ENCODE measurements at regions of chr12 and their contacts with region 1.

Region 1: DNA sequence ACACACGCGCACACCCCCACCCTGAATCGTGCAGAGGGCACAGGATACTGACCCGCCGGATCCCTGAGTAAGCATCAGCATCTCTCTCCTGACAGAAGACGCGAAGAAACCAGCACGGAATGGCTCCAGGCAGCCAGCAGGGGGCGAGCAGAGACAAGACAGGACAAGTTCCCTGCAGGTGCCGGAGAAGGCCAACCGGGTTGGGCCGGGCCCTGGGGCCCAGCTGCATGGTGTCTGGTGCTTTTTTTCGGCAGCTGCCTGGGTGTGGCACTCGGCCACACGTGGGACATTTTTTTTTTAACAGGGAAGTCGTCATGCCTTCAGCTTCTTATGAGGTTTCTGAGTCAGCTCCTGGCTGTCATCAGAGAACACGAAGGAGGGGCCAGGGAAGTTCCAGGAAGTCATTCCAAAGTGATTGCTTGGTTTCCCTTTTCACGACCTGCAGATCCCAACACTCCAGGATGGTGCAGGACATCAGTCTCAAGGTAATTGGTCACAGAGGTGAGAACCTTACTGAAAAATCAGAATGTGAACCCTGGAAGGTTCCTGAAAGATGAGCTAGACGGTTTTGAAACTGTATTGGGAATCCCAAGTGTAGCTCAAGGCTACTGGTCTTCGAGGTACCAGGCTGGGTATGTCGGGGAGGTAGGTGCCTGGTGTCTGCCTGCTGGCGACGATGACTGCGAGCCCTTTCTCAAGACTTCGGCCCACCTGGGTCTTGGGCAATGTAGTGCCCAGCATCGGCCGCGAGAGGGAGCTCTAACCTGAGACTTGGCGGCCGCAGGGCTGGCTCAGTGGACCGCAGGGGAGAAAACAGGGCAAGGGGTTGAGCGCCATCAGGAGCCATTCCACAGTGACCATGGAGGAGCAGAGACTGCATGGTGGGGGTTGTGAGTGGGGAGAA is 190.8 kb upstream of the PRMT8 start:
- DNase-seq: peak; percentile 87
- H3K4me3 Mint-ChIP-seq: peak overlapping the region; percentile 55
- H3K27ac Mint-ChIP-seq: peak overlapping the region; percentile 62
- H3K4me1 Mint-ChIP-seq: peaks cover 11% of the 10 kb centered on the region
- H3K27me3 Mint-ChIP-seq: peaks cover 7% of the 10 kb centered on the region

Region 2: DNA sequence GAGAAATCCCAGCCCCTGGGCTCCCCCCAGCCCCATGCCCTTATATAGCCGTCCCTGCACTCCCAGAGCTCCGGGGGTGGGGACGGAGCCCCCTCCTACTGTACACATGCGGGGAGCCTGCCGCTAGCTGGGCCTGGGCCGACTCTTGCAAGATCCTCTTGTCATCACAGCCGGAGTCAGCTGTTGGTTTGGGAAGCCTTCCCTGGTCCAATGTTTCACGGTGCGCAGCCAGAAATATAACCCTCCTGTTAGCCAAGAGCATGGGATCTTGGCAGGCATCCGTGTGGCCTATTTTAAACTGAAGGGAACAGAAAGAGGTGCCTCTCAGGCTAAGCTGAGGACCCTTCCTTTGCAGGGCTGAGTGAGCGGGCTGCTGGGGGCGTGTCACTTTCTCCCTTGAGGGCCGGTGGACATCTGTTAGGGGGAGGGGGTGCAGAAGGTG is 47.7 kb before region 1 on chr12:
- CTCF ChIA-PET with region 1: no interaction called
- POLR2A ChIA-PET with region 1: no interaction called
- intact Hi-C with region 1: no loop called
- DNase-seq: no peak
- H3K4me3 Mint-ChIP-seq: no peak overlapping the region
- H3K27ac Mint-ChIP-seq: no peak overlapping the region
- H3K4me1 Mint-ChIP-seq: peaks cover 6% of the 10 kb centered on the region
- H3K27me3 Mint-ChIP-seq: no peaks in the 10 kb centered on the region

Region 3: GRCh38 chr12:3275171-3276041 is 24.8 kb before region 1 on chr12:
- CTCF ChIA-PET with region 1: interaction called, 33 read pairs
- POLR2A ChIA-PET with region 1: no interaction called
- intact Hi-C with region 1: no loop called
- DNase-seq: peak; percentile 80
- H3K4me3 Mint-ChIP-seq: no peak overlapping the region
- H3K27ac Mint-ChIP-seq: no peak overlapping the region
- H3K4me1 Mint-ChIP-seq: no peaks in the 10 kb centered on the region
- H3K27me3 Mint-ChIP-seq: peaks cover 10% of the 10 kb centered on the region

Region 4: DNA sequence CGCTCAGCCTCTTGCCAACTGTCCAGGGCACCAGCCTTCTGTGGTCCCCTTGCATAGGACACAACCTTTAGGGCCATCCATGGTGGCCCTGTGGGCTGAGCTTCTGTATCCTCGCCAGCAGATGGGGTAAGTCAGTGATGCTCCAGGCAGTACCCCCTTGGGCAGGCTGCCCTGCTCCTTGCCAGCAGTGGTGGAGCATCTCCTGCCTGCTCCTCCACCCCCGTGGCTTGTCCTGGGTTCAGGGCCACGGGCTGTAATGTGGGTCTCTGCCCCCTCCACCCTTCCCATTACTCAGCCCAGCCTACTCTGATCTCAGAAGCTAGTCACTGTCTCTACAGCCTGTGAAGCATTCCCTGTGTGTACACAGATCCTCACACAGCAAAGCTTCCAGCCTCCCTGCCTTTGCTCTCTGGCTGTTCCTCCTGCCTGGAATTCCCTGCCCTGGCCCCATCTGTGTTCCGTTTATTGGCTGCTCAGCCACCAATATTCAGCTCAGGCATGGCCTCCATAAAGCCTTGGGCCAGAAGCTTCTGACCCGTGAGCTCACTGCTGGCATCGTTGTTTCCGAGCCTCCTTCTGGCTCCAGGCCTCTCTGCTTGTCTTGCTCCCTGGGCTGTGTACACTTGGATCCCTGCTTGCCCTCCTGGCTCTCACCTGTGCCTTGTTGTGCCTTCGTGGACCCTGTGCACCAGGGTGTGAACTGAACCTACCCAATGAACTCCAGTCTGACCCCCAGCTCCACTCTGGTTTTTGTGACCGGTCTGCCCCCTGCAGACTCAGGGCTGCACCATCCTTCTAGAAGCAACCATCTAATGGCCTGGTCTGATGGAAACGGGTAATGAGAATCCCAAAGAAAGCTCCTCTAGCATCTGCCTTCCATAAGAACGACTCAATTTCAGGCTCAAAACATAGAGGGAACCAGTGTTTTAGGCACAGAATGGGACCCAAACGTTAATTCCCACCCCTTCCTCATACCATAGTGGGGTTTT is 13.8 kb after region 1 on chr12:
- CTCF ChIA-PET with region 1: interaction called, 59 read pairs
- POLR2A ChIA-PET with region 1: no interaction called
- intact Hi-C with region 1: no loop called
- DNase-seq: peak; percentile 24
- H3K4me3 Mint-ChIP-seq: no peak overlapping the region
- H3K27ac Mint-ChIP-seq: no peak overlapping the region
- H3K4me1 Mint-ChIP-seq: no peaks in the 10 kb centered on the region
- H3K27me3 Mint-ChIP-seq: peaks cover 10% of the 10 kb centered on the region

Region 5: GRCh38 chr12:3342056-3342455 is 41.9 kb after region 1 on chr12:
- CTCF ChIA-PET with region 1: interaction called, 11 read pairs
- POLR2A ChIA-PET with region 1: no interaction called
- intact Hi-C with region 1: no loop called
- DNase-seq: no peak
- H3K4me3 Mint-ChIP-seq: no peak overlapping the region
- H3K27ac Mint-ChIP-seq: no peak overlapping the region
- H3K4me1 Mint-ChIP-seq: no peaks in the 10 kb centered on the region
- H3K27me3 Mint-ChIP-seq: peaks cover 22% of the 10 kb centered on the region

Region 6: DNA sequence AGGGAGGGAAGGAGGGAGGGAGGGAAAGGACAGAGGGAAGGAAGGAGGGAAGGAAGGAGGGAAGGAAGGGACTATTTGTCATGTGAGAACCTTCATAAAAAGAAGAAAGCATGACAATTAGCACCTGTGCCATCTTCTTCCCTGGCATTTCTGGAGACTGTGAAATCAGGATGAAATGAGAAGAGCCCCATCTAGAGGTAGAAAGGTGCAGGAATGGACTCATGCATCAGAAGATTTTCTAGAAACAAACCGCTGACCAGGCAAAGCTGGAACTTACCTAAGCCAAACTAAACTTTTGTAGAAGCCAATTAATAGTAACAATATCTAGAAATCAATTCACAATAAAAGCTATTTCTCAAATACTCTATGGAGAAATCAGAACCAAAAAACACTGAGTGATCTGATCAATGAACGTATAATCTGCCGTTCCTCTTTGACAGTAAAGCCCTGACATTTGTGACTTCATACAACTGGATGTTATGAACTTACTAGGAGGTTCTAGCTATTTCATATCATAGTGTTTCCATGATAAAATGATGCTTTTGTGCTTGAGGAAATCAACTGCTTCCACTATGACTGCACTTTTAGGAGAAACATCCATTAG is 477.1 kb after region 1 on chr12:
- CTCF ChIA-PET with region 1: interaction called, 32 read pairs
- POLR2A ChIA-PET with region 1: no interaction called
- intact Hi-C with region 1: loop called (anchors 1 kb)
- DNase-seq: no peak
- H3K4me3 Mint-ChIP-seq: no peak overlapping the region
- H3K27ac Mint-ChIP-seq: no peak overlapping the region
- H3K4me1 Mint-ChIP-seq: peaks cover 4% of the 10 kb centered on the region
- H3K27me3 Mint-ChIP-seq: no peaks in the 10 kb centered on the region

Region 7: DNA sequence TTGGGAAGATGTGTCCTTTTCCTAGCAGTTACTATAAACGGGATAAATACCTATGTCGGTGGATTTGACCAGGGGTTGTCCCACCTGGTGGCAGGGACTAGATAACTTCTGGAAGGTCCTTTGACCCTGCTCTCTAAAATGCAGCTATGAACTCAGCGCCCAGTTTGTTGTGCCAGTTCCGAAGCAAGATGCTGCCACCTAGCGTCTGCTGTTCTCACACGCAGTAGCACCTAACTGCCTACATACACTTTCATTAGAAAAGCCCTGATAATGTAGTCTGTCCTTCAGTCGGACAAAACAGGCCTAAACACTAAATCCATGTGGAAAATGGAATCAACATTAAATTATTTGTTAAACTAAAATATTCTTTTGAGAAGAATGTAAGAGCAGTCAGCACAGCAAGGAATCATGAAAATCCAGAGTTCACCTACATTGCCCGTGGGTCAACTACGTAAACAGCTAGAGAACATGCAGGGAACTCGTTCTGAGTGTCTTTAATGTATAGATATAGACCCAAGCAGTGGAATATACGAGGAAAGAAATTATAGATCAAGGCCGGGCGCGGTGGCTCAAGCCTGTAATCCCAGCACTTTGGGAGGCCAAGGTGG is 503.8 kb after region 1 on chr12:
- CTCF ChIA-PET with region 1: interaction called, 114 read pairs
- POLR2A ChIA-PET with region 1: no interaction called
- intact Hi-C with region 1: loop called (anchors 1 kb)
- DNase-seq: peak; percentile 81
- H3K4me3 Mint-ChIP-seq: no peak overlapping the region
- H3K27ac Mint-ChIP-seq: no peak overlapping the region
- H3K4me1 Mint-ChIP-seq: peaks cover 9% of the 10 kb centered on the region
- H3K27me3 Mint-ChIP-seq: no peaks in the 10 kb centered on the region